ENCODE measurements at regions of chr16 and their contacts with region 1.

Region 1: GRCh38 chr16:57906382-57907316 is 64.3 kb downstream of the CNGB1 start:
- DNase-seq: no peak
- ATAC-seq: peak; percentile 54 to 74; a peak in 5 of 6 replicates
- H3K4me3 ChIP-seq: no peak overlapping the region
- H3K27ac ChIP-seq: peak overlapping the region in 1 of 2 experiments; percentile 17; a peak in 2 of 6 replicates
- H3K4me1 ChIP-seq: peaks cover 5% of the 10 kb centered on the region; the same call in 1 of the 3 replicates
- CTCF ChIP-seq: peak; percentile 32; the same call in 1 of the 3 replicates
- EP300 ChIP-seq: no peak
- POLR2A ChIP-seq: no peak
- RAD21 ChIP-seq: peak; percentile 48 to 53

Region 2: GRCh38 chr16:57704011-57704904 is 202.4 kb before region 1 on chr16:
- CTCF ChIA-PET with region 1: no interaction called
- POLR2A ChIA-PET with region 1: no interaction called
- DNase-seq: peak; percentile 24 to 35
- ATAC-seq: peak; percentile 27 to 53; a peak in 3 of 6 replicates
- H3K4me3 ChIP-seq: no peak overlapping the region
- H3K27ac ChIP-seq: peak overlapping the region; percentile 23 to 48; a peak in 4 of 6 replicates
- H3K4me1 ChIP-seq: peaks cover 13% of the 10 kb centered on the region
- CTCF ChIP-seq: no peak
- EP300 ChIP-seq: no peak
- POLR2A ChIP-seq: no peak
- RAD21 ChIP-seq: no peak

Region 3: GRCh38 chr16:57916735-57917451 is 10.2 kb after region 1 on chr16:
- CTCF ChIA-PET with region 1: interaction called, 23 read pairs
- POLR2A ChIA-PET with region 1: no interaction called
- DNase-seq: peak in 1 of 2 experiments; percentile 28
- ATAC-seq: peak in 1 of 2 experiments; percentile 42; a peak in 1 of 6 replicates
- H3K4me3 ChIP-seq: no peak overlapping the region
- H3K27ac ChIP-seq: no peak overlapping the region
- H3K4me1 ChIP-seq: peaks cover 3% of the 10 kb centered on the region; the same call in 1 of the 3 replicates
- CTCF ChIP-seq: no peak
- EP300 ChIP-seq: no peak
- POLR2A ChIP-seq: no peak
- RAD21 ChIP-seq: no peak

Region 4: DNA sequence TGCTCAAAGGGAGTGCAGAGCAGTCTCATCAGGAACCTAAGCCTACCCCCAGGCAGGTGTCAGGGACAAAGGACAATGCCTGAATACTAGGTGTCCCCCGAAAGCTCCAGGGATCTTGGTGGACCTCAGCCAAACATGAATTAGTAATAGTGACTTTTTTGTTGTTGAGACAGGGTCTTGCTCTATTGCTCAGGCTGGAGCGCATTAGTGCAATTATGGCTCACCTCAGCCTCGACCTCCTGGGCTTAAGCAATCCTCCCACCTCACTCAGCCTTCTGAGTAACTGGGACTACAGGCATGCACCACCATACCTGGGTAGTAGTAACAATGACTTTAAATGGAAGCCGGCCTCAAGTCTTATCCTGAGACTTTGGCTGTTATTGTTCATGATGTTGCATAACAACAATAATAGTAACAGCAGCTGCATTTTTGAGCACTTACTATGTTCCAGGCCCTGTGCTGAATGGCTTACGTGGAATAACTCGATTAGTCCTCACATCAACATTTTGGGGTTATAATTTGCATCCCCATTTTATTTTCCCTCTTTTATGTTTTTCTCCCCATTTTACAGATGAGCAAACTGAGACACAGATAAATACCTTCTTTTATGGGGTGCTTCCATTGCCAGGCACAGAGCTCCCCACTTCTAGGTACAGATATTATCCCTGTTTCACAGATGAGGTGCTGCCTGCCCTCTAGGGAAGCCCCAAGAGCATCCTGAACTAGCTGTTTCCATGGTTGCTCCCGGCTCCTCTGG is 44.7 kb after region 1 on chr16:
- CTCF ChIA-PET with region 1: no interaction called
- POLR2A ChIA-PET with region 1: no interaction called
- DNase-seq: no peak
- ATAC-seq: no peak
- H3K4me3 ChIP-seq: no peak overlapping the region
- H3K27ac ChIP-seq: no peak overlapping the region
- H3K4me1 ChIP-seq: 0 out of 3 replicates have a peak, but pooled peaks cover 3% of the 10 kb centered on the region
- CTCF ChIP-seq: no peak
- EP300 ChIP-seq: no peak
- POLR2A ChIP-seq: no peak
- RAD21 ChIP-seq: no peak

Region 5: DNA sequence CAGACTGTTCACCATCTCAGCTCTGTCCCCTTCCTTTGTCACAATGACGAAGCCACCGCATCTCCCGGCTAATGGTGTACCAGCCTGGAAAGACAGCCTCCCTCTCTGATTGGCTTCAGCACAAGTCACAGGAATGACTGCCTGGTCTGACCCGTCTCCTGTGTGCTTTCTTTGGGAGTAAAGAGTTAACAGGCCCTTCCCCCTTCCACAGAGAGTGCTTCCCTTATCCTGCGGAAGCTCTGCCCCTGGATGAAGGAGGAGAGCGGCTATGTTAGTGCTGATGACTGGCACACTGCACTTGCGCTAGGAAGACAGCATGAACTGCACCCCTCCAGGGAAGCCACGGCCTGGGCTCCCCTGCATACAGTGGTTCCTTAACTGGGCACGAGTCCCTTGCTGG is 105.8 kb after region 1 on chr16:
- CTCF ChIA-PET with region 1: interaction called, 10 read pairs
- POLR2A ChIA-PET with region 1: no interaction called
- DNase-seq: no peak
- ATAC-seq: no peak; a peak in 1 of 6 replicates
- H3K4me3 ChIP-seq: no peak overlapping the region
- H3K27ac ChIP-seq: no peak overlapping the region
- H3K4me1 ChIP-seq: peaks cover 23% of the 10 kb centered on the region
- CTCF ChIP-seq: no peak
- EP300 ChIP-seq: no peak
- POLR2A ChIP-seq: no peak
- RAD21 ChIP-seq: no peak

Measured in A549 (cell line).